BJ (cell line): ENCODE measurements at regions of chr15 and their contacts with region 1.

Region 1: DNA sequence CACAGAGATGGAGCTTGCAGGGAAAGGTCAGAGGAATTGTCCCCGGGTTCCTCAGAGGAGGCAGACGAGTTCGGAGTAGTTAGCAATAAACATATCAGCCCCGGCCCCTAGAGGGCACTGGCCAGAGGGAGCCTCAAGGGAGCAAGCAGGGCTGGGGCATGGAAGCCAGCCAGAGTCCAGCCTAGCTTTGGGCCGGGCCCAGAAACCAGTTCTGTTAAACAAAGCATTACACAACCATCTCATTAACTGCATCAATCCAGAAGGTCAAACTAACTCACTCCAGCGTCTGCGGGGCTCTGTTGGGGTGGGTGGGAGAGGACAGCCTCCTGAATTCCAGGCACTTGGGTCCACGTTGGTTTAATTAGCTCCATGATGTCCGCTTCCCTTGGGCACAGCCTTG is 41.0 kb upstream of the IREB2 start:
- DNase-seq: no peak
- H3K4me3 ChIP-seq: no peak overlapping the region
- H3K27me3 ChIP-seq: no peaks in the 10 kb centered on the region; the same call in 1 of the 2 replicates
- CTCF ChIP-seq: peak; percentile 76

Region 2: GRCh38 chr15:78407608-78408354 is 10.8 kb after region 1 on chr15:
- CTCF ChIA-PET with region 1: interaction called, 37 read pairs
- POLR2A ChIA-PET with region 1: no interaction called
- DNase-seq: no peak
- H3K4me3 ChIP-seq: no peak overlapping the region
- H3K27me3 ChIP-seq: no peaks in the 10 kb centered on the region
- CTCF ChIP-seq: no peak

Region 3: GRCh38 chr15:78422571-78423340 is 25.8 kb after region 1 on chr15:
- CTCF ChIA-PET with region 1: interaction called, 46 read pairs
- POLR2A ChIA-PET with region 1: no interaction called
- DNase-seq: no peak
- H3K4me3 ChIP-seq: no peak overlapping the region
- H3K27me3 ChIP-seq: peaks cover 6% of the 10 kb centered on the region
- CTCF ChIP-seq: peak; percentile 96

Region 4: DNA sequence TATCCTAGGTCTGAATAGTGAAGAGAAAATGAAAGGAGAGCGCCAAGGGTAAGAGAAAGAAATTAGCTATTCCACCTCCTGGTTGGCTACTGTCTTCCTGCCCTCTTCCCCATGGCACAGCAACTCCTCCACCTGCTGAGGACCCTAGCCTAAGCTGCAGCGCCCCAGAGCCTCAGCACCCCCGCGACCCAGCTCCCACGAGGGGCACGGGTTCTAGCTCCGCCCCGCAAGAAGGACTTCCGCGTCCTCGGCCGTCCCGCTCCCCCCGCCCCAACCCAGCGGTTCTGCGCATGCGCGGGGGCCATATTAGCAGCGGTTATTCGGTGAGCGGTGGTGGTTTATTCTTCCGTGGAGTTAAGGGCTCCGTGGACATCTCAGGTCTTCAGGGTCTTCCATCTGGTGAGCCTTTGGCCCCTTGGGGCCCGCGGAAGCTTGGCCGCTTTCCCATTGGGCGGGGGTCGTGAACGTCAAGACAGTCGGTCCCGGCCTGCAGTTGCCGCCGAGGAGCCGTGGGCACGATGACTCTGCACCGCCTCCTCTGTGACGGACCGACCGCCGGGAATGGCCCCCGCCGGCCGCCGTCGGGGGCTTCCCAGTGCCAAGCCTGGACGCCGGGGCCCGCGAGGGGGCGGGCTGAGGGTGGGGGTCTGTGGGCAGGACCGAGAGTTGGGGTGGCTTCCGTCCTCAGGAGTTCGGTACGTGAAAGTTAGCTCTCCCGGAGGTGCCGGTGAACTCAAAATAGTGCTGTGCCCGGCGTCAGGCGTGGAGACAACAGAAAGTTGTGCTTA is 143.4 kb after region 1 on chr15 and contains the start of gene PSMA4:
- CTCF ChIA-PET with region 1: no interaction called
- POLR2A ChIA-PET with region 1: no interaction called
- DNase-seq: peak; percentile 34
- H3K4me3 ChIP-seq: peak within 1 kb of the TSS; percentile 63
- H3K27me3 ChIP-seq: no peaks in the 10 kb centered on the region
- CTCF ChIP-seq: 0 out of 2 replicates have a peak, but pooled peaks have one; percentile 33
- polyA plus RNA-seq, gene PSMA4: 115 and 252 TPM in 2 replicates

Region 5: GRCh38 chr15:78859971-78860732 is 463.2 kb after region 1 on chr15:
- CTCF ChIA-PET with region 1: no interaction called
- POLR2A ChIA-PET with region 1: interaction called, 11 read pairs
- DNase-seq: no peak
- H3K4me3 ChIP-seq: peak overlapping the region; percentile 50
- H3K27me3 ChIP-seq: no peaks in the 10 kb centered on the region
- CTCF ChIP-seq: peak; percentile 64